H1 (cell line): ENCODE measurements at regions of chr5 and their contacts with region 1.

Region 1: GRCh38 chr5:14650052-14650451 is 14.5 kb upstream of the OTULIN start:
- DNase-seq: no peak
- H3K4me3 ChIP-seq: no peak overlapping the region
- H3K27ac ChIP-seq: no peak overlapping the region
- H3K4me1 ChIP-seq: peaks cover 0 to 3% (median 0%) of the 10 kb centered on the region in 4 experiments; a peak in 2 of 7 replicates
- H3K27me3 ChIP-seq: no peaks in the 10 kb centered on the region
- CTCF ChIP-seq: no peak
- EP300 ChIP-seq: no peak
- POLR2A ChIP-seq: no peak
- RAD21 ChIP-seq: no peak

Region 2: DNA sequence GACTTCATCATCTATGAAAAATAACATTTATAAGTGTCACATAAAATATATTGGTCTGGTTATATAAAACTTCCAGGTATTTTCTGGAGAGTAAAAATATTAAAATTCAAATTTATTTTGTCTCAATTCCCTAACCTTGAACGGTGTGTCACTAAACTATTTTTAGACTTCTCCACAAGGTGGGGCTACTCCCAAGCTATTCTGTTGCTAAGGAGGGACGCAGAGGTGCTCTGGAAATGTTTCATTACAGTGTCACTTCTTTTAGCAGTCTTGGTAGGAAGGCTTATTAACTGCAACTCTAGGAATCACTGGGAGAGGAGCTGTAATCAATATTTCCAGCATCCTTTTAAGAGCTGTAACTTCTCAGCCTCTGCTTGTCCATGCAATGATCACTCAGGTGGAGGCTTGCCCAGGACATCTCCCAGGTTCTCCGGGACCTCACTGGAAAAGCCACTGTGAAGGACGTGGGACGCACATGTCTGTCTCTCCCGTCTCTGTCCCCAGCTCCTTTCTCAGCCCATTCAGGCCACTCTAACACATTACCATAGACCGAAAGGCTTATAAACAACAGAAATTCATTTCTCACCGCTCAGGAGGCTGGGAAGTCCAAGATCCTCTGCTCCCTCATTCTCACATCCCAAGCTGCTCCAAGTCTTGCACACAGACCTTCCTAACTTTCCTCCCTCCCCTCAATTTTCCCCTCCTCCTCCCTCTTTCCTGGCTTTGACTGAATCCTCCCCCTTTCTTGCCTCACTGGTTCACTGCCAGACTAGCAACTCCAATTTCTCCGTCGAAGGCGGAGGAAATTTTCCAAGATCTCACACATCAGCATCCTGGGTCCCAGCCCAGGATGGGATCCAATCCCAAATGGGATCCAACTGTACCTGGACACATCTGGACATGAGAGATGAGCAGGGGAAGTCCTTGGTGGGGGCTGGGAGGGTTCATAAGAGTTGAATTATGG is 672.9 kb before region 1 on chr5:
- CTCF ChIA-PET with region 1: interaction called, 28 read pairs
- POLR2A ChIA-PET with region 1: no interaction called
- DNase-seq: no peak
- H3K4me3 ChIP-seq: no peak overlapping the region
- H3K27ac ChIP-seq: no peak overlapping the region
- H3K4me1 ChIP-seq: no peaks in the 10 kb centered on the region
- H3K27me3 ChIP-seq: no peaks in the 10 kb centered on the region
- CTCF ChIP-seq: peak in 2 of 3 experiments; percentile 35 to 59; a peak in 2 of 4 replicates
- EP300 ChIP-seq: no peak
- POLR2A ChIP-seq: no peak
- RAD21 ChIP-seq: peak; percentile 83 to 85

Region 3: GRCh38 chr5:14399054-14399692 is 250.9 kb before region 1 on chr5:
- CTCF ChIA-PET with region 1: interaction called, 21 read pairs
- POLR2A ChIA-PET with region 1: no interaction called
- DNase-seq: no peak
- H3K4me3 ChIP-seq: no peak overlapping the region
- H3K27ac ChIP-seq: 0 out of 2 replicates have a peak overlapping the region, but pooled peaks have one; percentile 13
- H3K4me1 ChIP-seq: peaks cover 0 to 4% (median 1%) of the 10 kb centered on the region in 4 experiments; a peak in 2 of 7 replicates
- H3K27me3 ChIP-seq: no peaks in the 10 kb centered on the region
- CTCF ChIP-seq: peak in 2 of 3 experiments; percentile 45 to 48; a peak in 2 of 4 replicates
- EP300 ChIP-seq: no peak
- POLR2A ChIP-seq: no peak
- RAD21 ChIP-seq: peak; percentile 43 to 53

Region 4: DNA sequence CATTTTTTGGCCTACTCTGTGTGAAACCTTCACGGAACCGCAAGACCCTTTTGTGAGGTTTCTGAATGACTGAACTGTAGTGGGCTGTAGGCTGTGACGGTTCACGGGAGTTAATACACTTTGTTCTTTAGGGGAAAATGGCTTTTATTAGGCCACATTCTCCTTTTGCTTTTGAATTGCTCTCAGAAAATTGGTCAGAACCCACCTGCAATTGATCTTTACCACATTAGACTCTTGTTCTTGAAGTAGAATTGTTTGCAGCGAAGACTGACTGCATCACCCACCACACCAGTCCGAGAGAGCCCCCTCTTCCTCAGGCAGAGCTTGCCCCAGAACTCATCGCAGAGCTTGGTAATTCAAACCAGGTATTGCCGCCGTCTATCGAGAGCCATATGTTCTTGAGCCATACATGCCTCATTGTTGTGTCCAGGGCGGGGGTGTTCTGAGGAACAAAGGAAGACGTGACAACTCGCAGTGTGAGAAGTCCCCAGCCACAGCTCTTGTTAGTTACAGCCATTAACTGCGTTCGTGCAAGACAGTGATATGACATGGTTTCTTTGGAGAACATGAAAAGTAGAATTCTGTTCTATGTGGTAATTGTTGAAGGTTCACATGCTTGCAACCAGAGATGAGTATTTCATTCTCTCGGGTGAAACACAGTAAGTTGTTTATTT is 234.9 kb before region 1 on chr5:
- CTCF ChIA-PET with region 1: interaction called, 10 read pairs
- POLR2A ChIA-PET with region 1: no interaction called
- DNase-seq: no peak
- H3K4me3 ChIP-seq: no peak overlapping the region
- H3K27ac ChIP-seq: no peak overlapping the region
- H3K4me1 ChIP-seq: peaks cover 4 to 15% (median 11%) of the 10 kb centered on the region in 4 experiments
- H3K27me3 ChIP-seq: no peaks in the 10 kb centered on the region
- CTCF ChIP-seq: no peak
- EP300 ChIP-seq: no peak
- POLR2A ChIP-seq: no peak
- RAD21 ChIP-seq: no peak

Region 5: DNA sequence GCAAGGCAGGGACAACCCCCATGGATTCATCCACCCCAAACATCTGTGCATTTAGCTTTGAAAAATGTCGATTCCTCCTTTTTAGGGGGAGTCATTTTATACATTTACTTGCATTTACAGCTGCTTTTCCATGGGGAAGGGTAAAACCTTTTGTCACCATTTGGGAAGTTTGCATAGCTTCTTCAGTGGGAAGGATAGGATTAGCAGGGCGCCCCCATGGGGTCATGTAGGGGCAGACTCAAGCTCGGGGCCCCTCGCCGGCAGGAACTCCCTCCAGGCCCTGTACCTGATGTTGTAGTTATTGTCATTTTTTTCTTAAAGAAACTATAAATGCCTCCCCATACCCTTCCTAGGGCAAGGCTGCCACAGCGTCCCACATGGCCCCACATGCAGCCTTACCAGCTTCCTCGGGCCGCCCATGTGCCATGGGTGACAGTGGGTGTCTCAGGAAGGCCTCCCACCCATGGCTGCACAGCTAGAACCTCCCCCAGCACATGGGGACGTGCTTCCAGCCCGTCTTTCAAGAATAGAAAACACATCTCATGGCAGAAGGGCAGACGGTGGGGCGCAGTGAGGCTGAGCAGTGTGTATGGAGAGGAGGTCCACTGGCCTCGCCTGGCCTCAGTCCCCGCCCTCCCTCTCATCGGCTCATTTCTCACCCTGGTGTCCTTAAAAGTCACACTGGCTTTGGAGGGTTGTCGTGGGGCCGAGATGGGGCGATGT is 144.6 kb before region 1 on chr5:
- CTCF ChIA-PET with region 1: interaction called, 51 read pairs
- POLR2A ChIA-PET with region 1: no interaction called
- DNase-seq: no peak
- H3K4me3 ChIP-seq: no peak overlapping the region
- H3K27ac ChIP-seq: no peak overlapping the region
- H3K4me1 ChIP-seq: no peaks in the 10 kb centered on the region; a peak in 1 of 7 replicates
- H3K27me3 ChIP-seq: no peaks in the 10 kb centered on the region
- CTCF ChIP-seq: peak; percentile 46 to 57 (median 48)
- EP300 ChIP-seq: no peak
- POLR2A ChIP-seq: no peak
- RAD21 ChIP-seq: peak; percentile 37 to 50

Region 6: GRCh38 chr5:14630671-14631070 is 19.4 kb before region 1 on chr5:
- CTCF ChIA-PET with region 1: interaction called, 10 read pairs
- POLR2A ChIA-PET with region 1: no interaction called
- DNase-seq: no peak
- H3K4me3 ChIP-seq: no peak overlapping the region
- H3K27ac ChIP-seq: no peak overlapping the region
- H3K4me1 ChIP-seq: no peaks in the 10 kb centered on the region
- H3K27me3 ChIP-seq: no peaks in the 10 kb centered on the region
- CTCF ChIP-seq: no peak
- EP300 ChIP-seq: no peak
- POLR2A ChIP-seq: no peak
- RAD21 ChIP-seq: no peak